CD4-positive, alpha-beta memory T cell (primary cell): ENCODE measurements at regions of chr20 and their contacts with region 1.

Region 1: DNA sequence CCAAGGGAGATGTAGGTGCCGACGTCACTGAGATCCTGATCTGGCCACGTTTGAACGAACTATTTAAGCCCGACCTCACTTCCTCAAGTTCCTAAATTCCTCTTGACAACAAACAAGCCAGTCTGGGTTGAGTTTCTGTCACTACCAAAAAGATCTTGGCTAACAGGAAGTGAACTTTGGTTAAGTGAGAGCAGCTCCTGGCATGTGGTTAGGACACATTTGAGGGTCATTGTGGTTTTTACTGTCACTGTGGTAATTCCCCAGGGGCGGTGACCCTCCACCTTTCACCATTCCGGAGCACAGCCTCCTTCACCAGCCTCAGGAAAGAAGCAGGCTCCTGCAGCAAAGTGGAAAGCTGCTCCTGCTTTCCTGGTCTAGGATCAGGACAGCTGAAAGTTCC is 43.1 kb upstream of the ZNF831 start:
- DNase-seq: peak; percentile 52 to 69 (median 64)
- H3K4me3 ChIP-seq: no peak overlapping the region
- H3K4me3 Mint-ChIP-seq: peak overlapping the region; percentile 32 to 89 (median 71)
- H3K27ac ChIP-seq: peak overlapping the region; percentile 80
- H3K27ac Mint-ChIP-seq: peak overlapping the region; percentile 94 to 100 (median 99)
- H3K4me1 ChIP-seq: peaks cover 86% of the 10 kb centered on the region
- H3K4me1 Mint-ChIP-seq: peaks cover 66 to 94% (median 86%) of the 10 kb centered on the region in 4 donors
- H3K27me3 ChIP-seq: no peaks in the 10 kb centered on the region
- H3K27me3 Mint-ChIP-seq: no peaks in the 10 kb centered on the region

Region 2: DNA sequence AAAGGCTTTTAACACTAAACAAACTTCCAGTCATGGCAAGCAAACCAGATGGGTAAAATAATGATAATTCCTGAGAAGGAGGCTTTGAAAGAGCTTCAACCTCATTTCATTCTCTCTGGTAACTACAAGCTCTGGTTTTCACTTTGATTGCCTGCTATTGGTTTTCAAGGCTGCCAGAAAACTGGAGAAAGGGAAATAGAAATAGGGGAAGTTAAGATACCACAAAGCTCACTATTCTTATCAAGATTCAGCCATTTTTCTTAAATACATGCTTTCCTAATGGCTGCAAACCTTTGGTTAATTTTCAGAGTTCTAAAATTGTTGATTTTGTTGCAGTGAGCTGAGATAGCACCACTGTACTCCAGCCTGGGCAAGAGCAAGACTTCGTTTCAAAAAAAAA is 181.9 kb before region 1 on chr20:
- CTCF ChIA-PET with region 1: no interaction called
- POLR2A ChIA-PET with region 1: no interaction called
- intact Hi-C with region 1: no loop called
- DNase-seq: no peak
- H3K4me3 ChIP-seq: no peak overlapping the region
- H3K4me3 Mint-ChIP-seq: no peak overlapping the region
- H3K27ac ChIP-seq: no peak overlapping the region
- H3K27ac Mint-ChIP-seq: no peak overlapping the region
- H3K4me1 ChIP-seq: no peaks in the 10 kb centered on the region
- H3K4me1 Mint-ChIP-seq: no peaks in the 10 kb centered on the region
- H3K27me3 ChIP-seq: peaks cover 9% of the 10 kb centered on the region
- H3K27me3 Mint-ChIP-seq: peaks cover 17 to 19% of the 10 kb centered on the region in 2 donors

Region 3: GRCh38 chr20:59013959-59014608 is 106.4 kb before region 1 on chr20:
- CTCF ChIA-PET with region 1: no interaction called
- POLR2A ChIA-PET with region 1: no interaction called
- intact Hi-C with region 1: no loop called
- DNase-seq: peak; percentile 51 to 58 (median 54)
- H3K4me3 ChIP-seq: no peak overlapping the region
- H3K4me3 Mint-ChIP-seq: peak overlapping the region in 6 of 8 donors; percentile 3 to 63 (median 36)
- H3K27ac ChIP-seq: no peak overlapping the region
- H3K27ac Mint-ChIP-seq: peak overlapping the region; percentile 3 to 79 (median 50)
- H3K4me1 ChIP-seq: peaks cover 31% of the 10 kb centered on the region
- H3K4me1 Mint-ChIP-seq: peaks cover 30 to 49% (median 37%) of the 10 kb centered on the region in 4 donors
- H3K27me3 ChIP-seq: no peaks in the 10 kb centered on the region
- H3K27me3 Mint-ChIP-seq: no peaks in the 10 kb centered on the region

Region 4: GRCh38 chr20:59042796-59043660 is 77.5 kb before region 1 on chr20:
- CTCF ChIA-PET with region 1: no interaction called
- POLR2A ChIA-PET with region 1: interaction called, 4 read pairs
- intact Hi-C with region 1: loop called (anchors 5 kb)
- DNase-seq: peak; percentile 92 to 96 (median 95)
- H3K4me3 ChIP-seq: peak overlapping the region; percentile 65 to 91
- H3K4me3 Mint-ChIP-seq: peak overlapping the region; percentile 84 to 95 (median 92)
- H3K27ac ChIP-seq: peak overlapping the region; percentile 92
- H3K27ac Mint-ChIP-seq: peak overlapping the region; percentile 91 to 97 (median 97)
- H3K4me1 ChIP-seq: peaks cover 50% of the 10 kb centered on the region
- H3K4me1 Mint-ChIP-seq: peaks cover 31 to 59% (median 48%) of the 10 kb centered on the region in 4 donors
- H3K27me3 ChIP-seq: no peaks in the 10 kb centered on the region
- H3K27me3 Mint-ChIP-seq: no peaks in the 10 kb centered on the region

Region 5: DNA sequence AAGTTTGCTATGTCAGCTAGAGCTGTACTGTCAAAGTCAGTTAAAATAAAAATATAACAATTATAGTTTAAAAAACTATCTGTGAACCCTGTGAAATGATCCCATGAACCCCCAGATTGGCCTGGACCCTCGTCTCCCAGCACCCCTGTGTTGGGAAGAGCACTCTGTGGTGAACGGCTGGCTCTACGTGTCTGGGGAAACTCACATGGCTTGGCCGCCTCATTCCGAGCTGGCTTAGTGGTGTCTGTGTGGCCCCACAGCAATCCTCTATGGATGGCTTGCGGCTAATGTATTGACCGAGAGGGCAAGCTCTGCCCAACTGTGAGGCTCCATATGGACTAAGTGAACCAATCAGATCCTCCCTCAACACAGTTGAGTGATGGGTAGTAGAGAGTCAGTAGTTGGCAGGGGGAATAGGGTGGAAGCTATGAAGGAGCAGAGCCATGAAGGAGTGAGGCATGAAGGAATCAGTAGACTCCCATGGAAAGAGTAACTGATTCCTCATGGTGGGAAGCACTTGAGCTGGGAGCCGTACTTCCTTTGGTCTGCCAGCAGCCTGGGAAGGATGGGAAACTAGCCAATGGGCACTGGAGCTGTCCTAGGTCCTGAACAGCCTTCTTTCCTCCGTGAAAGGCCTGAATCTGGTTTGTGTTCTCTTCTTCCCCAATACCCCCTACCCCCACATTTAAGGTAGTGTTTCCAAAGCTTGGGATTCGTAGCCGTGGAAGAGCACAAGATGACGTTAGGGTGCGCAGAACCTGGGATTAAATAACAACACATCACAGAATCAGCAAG is 21.5 kb after region 1 on chr20:
- CTCF ChIA-PET with region 1: interaction called, 35 read pairs
- POLR2A ChIA-PET with region 1: interaction called, 307 read pairs
- intact Hi-C with region 1: loop called (anchors 1 kb)
- DNase-seq: peak in 1 of 5 donors; percentile 28
- H3K4me3 ChIP-seq: no peak overlapping the region
- H3K4me3 Mint-ChIP-seq: no peak overlapping the region
- H3K27ac ChIP-seq: no peak overlapping the region
- H3K27ac Mint-ChIP-seq: peak overlapping the region in 1 of 7 donors; percentile 10
- H3K4me1 ChIP-seq: peaks cover 38% of the 10 kb centered on the region
- H3K4me1 Mint-ChIP-seq: peaks cover 32 to 59% (median 38%) of the 10 kb centered on the region in 4 donors
- H3K27me3 ChIP-seq: no peaks in the 10 kb centered on the region
- H3K27me3 Mint-ChIP-seq: no peaks in the 10 kb centered on the region

Region 6: GRCh38 chr20:59159493-59160376 is 39.2 kb after region 1 on chr20:
- CTCF ChIA-PET with region 1: interaction called, 37 read pairs
- POLR2A ChIA-PET with region 1: interaction called, 307 read pairs
- intact Hi-C with region 1: no loop called
- DNase-seq: peak; percentile 85 to 94 (median 89)
- H3K4me3 ChIP-seq: peak overlapping the region; percentile 48 to 76
- H3K4me3 Mint-ChIP-seq: peak overlapping the region; percentile 83 to 96 (median 89)
- H3K27ac ChIP-seq: peak overlapping the region; percentile 97
- H3K27ac Mint-ChIP-seq: peak overlapping the region; percentile 97 to 99 (median 99)
- H3K4me1 ChIP-seq: peaks cover 85% of the 10 kb centered on the region
- H3K4me1 Mint-ChIP-seq: peaks cover 67 to 98% (median 81%) of the 10 kb centered on the region in 4 donors
- H3K27me3 ChIP-seq: no peaks in the 10 kb centered on the region
- H3K27me3 Mint-ChIP-seq: no peaks in the 10 kb centered on the region

Region 7: GRCh38 chr20:59177261-59178250 is 57.1 kb after region 1 on chr20:
- CTCF ChIA-PET with region 1: interaction called, 8 read pairs
- POLR2A ChIA-PET with region 1: interaction called, 44 read pairs
- intact Hi-C with region 1: loop called (anchors 2 kb)
- DNase-seq: peak; percentile 54 to 75 (median 59)
- H3K4me3 ChIP-seq: no peak overlapping the region
- H3K4me3 Mint-ChIP-seq: peak overlapping the region; percentile 67 to 88 (median 78)
- H3K27ac ChIP-seq: peak overlapping the region; percentile 68
- H3K27ac Mint-ChIP-seq: peak overlapping the region; percentile 88 to 98 (median 96)
- H3K4me1 ChIP-seq: peaks cover 84% of the 10 kb centered on the region
- H3K4me1 Mint-ChIP-seq: peaks cover 70 to 98% (median 86%) of the 10 kb centered on the region in 4 donors
- H3K27me3 ChIP-seq: no peaks in the 10 kb centered on the region
- H3K27me3 Mint-ChIP-seq: no peaks in the 10 kb centered on the region